ENCODE measurements at regions of chr3 and their contacts with region 1.

Region 1: GRCh38 chr3:156599089-156599874 is 44.4 kb upstream of the SSR3 start:
- DNase-seq: no peak
- H3K4me3 ChIP-seq: no peak overlapping the region
- H3K27ac ChIP-seq: no peak overlapping the region
- H3K4me1 ChIP-seq: peaks cover 0 to 7% (median 0%) of the 10 kb centered on the region in 4 experiments; a peak in 2 of 7 replicates
- H3K27me3 ChIP-seq: no peaks in the 10 kb centered on the region
- CTCF ChIP-seq: no peak
- EP300 ChIP-seq: no peak
- POLR2A ChIP-seq: no peak
- RAD21 ChIP-seq: no peak

Region 2: GRCh38 chr3:156535162-156535627 is 64.1 kb before region 1 on chr3:
- CTCF ChIA-PET with region 1: no interaction called
- POLR2A ChIA-PET with region 1: no interaction called
- DNase-seq: peak in 1 of 2 experiments; percentile 46
- H3K4me3 ChIP-seq: no peak overlapping the region
- H3K27ac ChIP-seq: no peak overlapping the region
- H3K4me1 ChIP-seq: peaks cover 0 to 3% (median under 1%) of the 10 kb centered on the region in 4 experiments; a peak in 3 of 7 replicates
- H3K27me3 ChIP-seq: no peaks in the 10 kb centered on the region
- CTCF ChIP-seq: no peak
- EP300 ChIP-seq: no peak
- POLR2A ChIP-seq: no peak
- RAD21 ChIP-seq: peak; percentile 14 to 36; a peak in 3 of 4 replicates

Region 3: GRCh38 chr3:156615592-156616173 is 16.4 kb after region 1 on chr3:
- CTCF ChIA-PET with region 1: interaction called, 19 read pairs
- POLR2A ChIA-PET with region 1: no interaction called
- DNase-seq: no peak
- H3K4me3 ChIP-seq: no peak overlapping the region
- H3K27ac ChIP-seq: no peak overlapping the region
- H3K4me1 ChIP-seq: no peaks in the 10 kb centered on the region; a peak in 1 of 7 replicates
- H3K27me3 ChIP-seq: no peaks in the 10 kb centered on the region
- CTCF ChIP-seq: no peak
- EP300 ChIP-seq: no peak
- POLR2A ChIP-seq: no peak
- RAD21 ChIP-seq: no peak

Region 4: GRCh38 chr3:156816800-156817645 is 217.7 kb after region 1 on chr3:
- CTCF ChIA-PET with region 1: no interaction called
- POLR2A ChIA-PET with region 1: no interaction called
- DNase-seq: peak; percentile 81 to 84
- H3K4me3 ChIP-seq: peak overlapping the region; percentile 25 to 57 (median 48)
- H3K27ac ChIP-seq: no peak overlapping the region
- H3K4me1 ChIP-seq: peaks cover 0 to 4% (median 1%) of the 10 kb centered on the region in 4 experiments; a peak in 4 of 7 replicates
- H3K27me3 ChIP-seq: peaks cover 11 to 45% (median 28%) of the 10 kb centered on the region in 4 experiments
- CTCF ChIP-seq: no peak
- EP300 ChIP-seq: peak; percentile 55 to 91
- POLR2A ChIP-seq: peak in 1 of 2 experiments; percentile 18; a peak in 1 of 3 replicates
- RAD21 ChIP-seq: no peak; a peak in 1 of 4 replicates

Measured in H1 (cell line).